ENCODE measurements at regions of chr20 and their contacts with region 1.

Region 1: GRCh38 chr20:56843817-56844216 is 214.7 kb downstream of the TFAP2C start:
- DNase-seq: no peak

Region 2: GRCh38 chr20:54938180-54939068 is 1905.4 kb before region 1 on chr20:
- intact Hi-C with region 1: loop called in 1 of 2 experiments (anchors 10 kb)
- DNase-seq: no peak

Region 3: DNA sequence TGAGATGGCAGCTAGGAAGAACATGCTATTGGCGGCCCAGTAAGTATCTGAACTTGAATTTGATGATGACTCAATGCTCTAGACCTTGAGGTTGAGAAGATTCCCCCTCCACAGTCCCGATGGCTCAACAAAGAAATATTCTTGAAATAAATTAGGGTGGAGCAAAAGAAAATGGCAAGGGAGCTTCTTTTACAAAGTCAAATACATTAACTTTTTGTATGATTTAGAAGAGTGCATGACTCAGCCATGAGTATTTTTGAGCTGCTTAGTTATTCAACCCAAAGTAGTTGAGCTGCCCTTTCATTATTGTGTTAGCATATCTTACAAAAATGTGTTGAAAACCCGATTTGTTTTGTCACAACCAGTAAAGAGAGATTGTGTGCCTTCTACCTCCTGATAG is 207.1 kb before region 1 on chr20:
- intact Hi-C with region 1: no loop called
- DNase-seq: no peak

Region 4: DNA sequence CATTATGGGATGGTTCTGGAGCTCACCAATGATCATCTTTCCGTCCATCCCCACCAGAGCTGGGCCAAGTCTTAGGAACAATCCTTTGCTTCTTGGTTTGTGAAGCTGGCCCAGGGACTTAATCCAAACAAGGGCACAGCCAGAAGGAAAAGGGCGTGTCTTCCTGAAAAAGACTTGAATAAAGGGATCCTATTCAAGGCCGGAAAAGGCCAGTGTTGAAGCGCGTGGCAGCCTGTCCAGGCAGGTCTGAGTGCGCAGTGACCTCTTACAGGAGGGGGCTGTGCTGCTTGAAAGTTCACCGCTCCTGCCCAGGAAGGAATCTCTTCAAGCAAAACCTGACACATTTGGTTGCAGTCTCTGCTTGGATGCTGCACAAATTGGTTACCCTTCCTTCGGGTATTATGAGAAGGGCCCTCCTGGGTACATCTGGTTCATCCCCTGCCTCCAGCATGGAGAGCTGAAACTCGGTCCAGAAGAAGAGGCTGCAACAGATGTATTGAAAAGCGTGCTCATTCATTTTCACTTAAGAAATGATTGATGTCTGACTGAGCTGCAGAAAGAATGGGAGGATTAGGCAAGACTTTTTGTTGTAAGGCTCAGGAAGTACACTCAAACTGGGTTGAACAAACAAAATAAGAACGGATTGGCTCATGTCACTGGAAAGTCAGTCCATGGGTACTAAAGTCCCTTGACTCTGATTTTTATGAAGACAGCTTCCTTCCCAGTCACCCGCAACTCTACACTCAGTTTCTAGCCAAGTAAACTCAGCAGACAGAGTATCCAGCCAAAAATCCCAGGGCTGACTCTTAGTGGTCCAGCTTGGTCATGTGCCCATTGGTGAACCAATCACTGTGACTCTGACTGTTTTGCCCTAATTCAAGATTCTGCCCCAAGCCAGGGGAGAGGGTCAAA is 78.4 kb before region 1 on chr20:
- intact Hi-C with region 1: no loop called
- DNase-seq: peak; percentile 38

Region 5: GRCh38 chr20:56797020-56797419 is 46.8 kb before region 1 on chr20:
- intact Hi-C with region 1: no loop called
- DNase-seq: peak; percentile 16

Region 6: DNA sequence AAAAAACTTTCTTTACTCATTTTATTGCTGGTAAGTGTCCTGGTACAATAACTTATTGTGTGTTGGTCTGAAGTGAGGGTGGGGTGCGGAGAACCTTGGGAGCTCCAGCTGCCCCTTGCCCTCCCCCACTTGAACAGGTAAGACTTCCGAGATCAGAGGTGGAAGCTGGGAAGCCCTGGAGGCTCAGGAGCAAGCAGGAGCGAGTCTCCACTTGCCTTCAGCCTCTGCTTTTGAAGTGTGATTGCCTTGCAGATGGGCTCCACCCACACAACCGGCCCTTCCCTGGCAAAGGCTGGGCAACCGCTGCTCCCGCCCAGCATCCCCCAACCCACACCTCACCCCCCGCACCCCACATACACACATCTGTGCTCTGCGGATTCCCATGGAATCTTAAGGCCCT is 35.1 kb before region 1 on chr20:
- intact Hi-C with region 1: loop called in 1 of 2 experiments (anchors 1 kb)
- DNase-seq: no peak